ENCODE measurements at regions of chr12 and their contacts with region 1.

Region 1: DNA sequence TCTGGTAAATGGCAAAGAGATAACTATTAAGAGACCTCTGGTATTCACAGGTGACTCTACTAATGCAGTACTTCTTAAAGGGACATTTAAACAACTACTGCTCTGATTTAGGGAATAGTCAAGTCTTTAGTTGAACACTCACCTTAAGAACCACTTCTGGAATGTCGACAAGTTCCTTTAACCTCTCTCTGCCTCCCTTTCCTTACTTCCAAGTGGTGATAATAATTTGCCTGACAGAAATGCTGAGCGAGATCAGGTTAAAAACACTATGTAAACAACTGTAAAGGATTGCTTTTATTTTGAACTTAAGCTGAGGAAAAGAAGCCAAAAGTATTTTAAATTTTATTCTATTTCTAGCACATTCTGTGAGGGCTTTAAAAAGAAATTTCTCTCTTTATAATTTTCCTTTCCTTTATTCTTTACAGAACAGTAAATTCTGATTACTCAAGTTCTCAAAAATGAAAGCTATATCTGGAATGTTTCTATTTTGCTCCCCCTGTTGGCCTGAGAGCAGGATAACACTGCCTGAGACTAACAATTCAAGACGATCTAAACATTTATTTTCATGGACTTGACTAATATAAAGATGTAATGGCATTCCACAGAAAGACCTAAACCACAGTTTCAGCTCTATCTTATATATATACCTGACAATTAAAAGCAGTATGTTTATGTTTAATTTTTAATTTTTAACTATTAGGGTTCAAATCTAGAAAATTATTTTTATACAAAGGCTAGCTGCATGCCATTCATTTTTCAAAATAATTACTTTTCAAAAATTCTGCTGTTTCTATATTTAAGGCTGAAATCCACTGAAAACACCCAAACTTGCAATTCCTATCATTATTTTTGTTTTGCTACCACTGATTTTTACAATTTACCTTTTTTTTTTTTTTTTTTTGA is 29.2 kb downstream of the ZCCHC8 start:
- DNase-seq: no peak
- H3K4me3 ChIP-seq: no peak overlapping the region
- H3K27ac ChIP-seq: 0 out of 2 replicates have a peak overlapping the region, but pooled peaks have one; percentile 16
- H3K4me1 ChIP-seq: no peaks in the 10 kb centered on the region
- H3K27me3 ChIP-seq: no peaks in the 10 kb centered on the region
- CTCF ChIP-seq: peak in 2 of 3 experiments; percentile 45 to 56; a peak in 2 of 4 replicates
- EP300 ChIP-seq: no peak
- POLR2A ChIP-seq: no peak
- RAD21 ChIP-seq: peak; percentile 59 to 62

Region 2: GRCh38 chr12:122293081-122293480 is 178.5 kb before region 1 on chr12:
- CTCF ChIA-PET with region 1: no interaction called
- POLR2A ChIA-PET with region 1: no interaction called
- DNase-seq: no peak
- H3K4me3 ChIP-seq: no peak overlapping the region
- H3K27ac ChIP-seq: no peak overlapping the region
- H3K4me1 ChIP-seq: no peaks in the 10 kb centered on the region
- H3K27me3 ChIP-seq: no peaks in the 10 kb centered on the region; a peak in 1 of 7 replicates
- CTCF ChIP-seq: no peak
- EP300 ChIP-seq: no peak
- POLR2A ChIP-seq: no peak
- RAD21 ChIP-seq: no peak

Region 3: GRCh38 chr12:122399592-122400373 is 71.8 kb before region 1 on chr12:
- CTCF ChIA-PET with region 1: interaction called, 130 read pairs
- POLR2A ChIA-PET with region 1: interaction called, 43 read pairs
- DNase-seq: peak in 1 of 2 experiments; percentile 60
- H3K4me3 ChIP-seq: peak overlapping the region in 3 of 4 experiments; percentile 32 to 51 (median 44); a peak in 5 of 8 replicates
- H3K27ac ChIP-seq: peak overlapping the region; percentile 74
- H3K4me1 ChIP-seq: peaks cover 3 to 8% (median 5%) of the 10 kb centered on the region in 4 experiments; a peak in 6 of 7 replicates
- H3K27me3 ChIP-seq: no peaks in the 10 kb centered on the region
- CTCF ChIP-seq: peak in 2 of 3 experiments; percentile 72 to 77; a peak in 3 of 4 replicates
- EP300 ChIP-seq: no peak
- POLR2A ChIP-seq: peak in 1 of 2 experiments; percentile 39; a peak in 1 of 3 replicates
- RAD21 ChIP-seq: peak; percentile 90 to 92

Region 4: DNA sequence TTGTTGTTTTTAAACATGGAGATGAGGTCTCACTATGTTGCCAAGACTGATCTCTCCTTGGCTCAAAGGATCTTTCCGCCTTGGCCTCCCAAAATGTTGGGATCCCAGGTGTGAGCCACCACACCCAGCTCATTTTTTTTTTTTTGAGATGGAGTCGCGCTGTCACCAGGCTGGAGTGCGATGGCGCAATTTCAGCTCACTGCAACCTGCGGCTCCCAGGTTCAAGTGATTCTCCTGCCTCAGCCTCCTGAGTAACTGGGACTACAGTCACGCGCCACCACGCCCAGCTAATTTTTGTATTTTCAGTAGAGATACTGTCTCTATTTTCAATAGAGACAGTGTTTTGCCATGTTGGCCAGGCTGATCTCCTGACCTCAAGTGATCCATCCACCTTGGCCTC is 44.2 kb before region 1 on chr12:
- CTCF ChIA-PET with region 1: interaction called, 14 read pairs
- POLR2A ChIA-PET with region 1: interaction called, 3 read pairs
- DNase-seq: no peak
- H3K4me3 ChIP-seq: no peak overlapping the region
- H3K27ac ChIP-seq: no peak overlapping the region
- H3K4me1 ChIP-seq: peaks cover 0 to 6% (median 2%) of the 10 kb centered on the region in 4 experiments; a peak in 2 of 7 replicates
- H3K27me3 ChIP-seq: no peaks in the 10 kb centered on the region
- CTCF ChIP-seq: no peak
- EP300 ChIP-seq: no peak
- POLR2A ChIP-seq: no peak
- RAD21 ChIP-seq: no peak

Region 5: GRCh38 chr12:122500685-122501488 is 29.3 kb after region 1 on chr12 and contains the start of gene ZCCHC8:
- CTCF ChIA-PET with region 1: interaction called, 12 read pairs
- POLR2A ChIA-PET with region 1: interaction called, 12 read pairs
- DNase-seq: peak; percentile 94 to 95
- H3K4me3 ChIP-seq: peak within 1 kb of the TSS; percentile 77 to 96 (median 94)
- H3K27ac ChIP-seq: peak within 1 kb of the TSS; percentile 90
- H3K4me1 ChIP-seq: peaks cover 0 to 3% (median 0%) of the 10 kb centered on the region in 4 experiments; a peak in 1 of 7 replicates
- H3K27me3 ChIP-seq: no peaks in the 10 kb centered on the region
- CTCF ChIP-seq: peak; percentile 5 to 24 (median 19); a peak in 2 of 4 replicates
- EP300 ChIP-seq: peak in 1 of 2 experiments; percentile 4; a peak in 1 of 3 replicates
- POLR2A ChIP-seq: peak; percentile 81 to 85
- RAD21 ChIP-seq: no peak
- total RNA-seq, gene ZCCHC8: 27.4 and 28.9 TPM in 2 replicates

Measured in H1 (cell line).